ENCODE measurements at regions of chr4 and their contacts with region 1.

Region 1: GRCh38 chr4:110005461-110006056 is 92.9 kb downstream of the EGF start:
- DNase-seq: no peak
- H3K4me3 ChIP-seq: no peak overlapping the region
- H3K27ac ChIP-seq: no peak overlapping the region
- H3K4me1 ChIP-seq: no peaks in the 10 kb centered on the region
- H3K27me3 ChIP-seq: no peaks in the 10 kb centered on the region
- CTCF ChIP-seq: peak; percentile 54 to 67 (median 61)
- EP300 ChIP-seq: no peak
- POLR2A ChIP-seq: no peak

Region 2: GRCh38 chr4:109214622-109215301 is 790.8 kb before region 1 on chr4:
- in situ Hi-C with region 1: no loop called
- intact Hi-C with region 1: no loop called
- DNase-seq: no peak
- H3K4me3 ChIP-seq: no peak overlapping the region
- H3K27ac ChIP-seq: no peak overlapping the region
- H3K4me1 ChIP-seq: no peaks in the 10 kb centered on the region
- H3K27me3 ChIP-seq: no peaks in the 10 kb centered on the region
- CTCF ChIP-seq: no peak
- EP300 ChIP-seq: no peak
- POLR2A ChIP-seq: no peak

Region 3: GRCh38 chr4:110310795-110311194 is 305.2 kb after region 1 on chr4:
- in situ Hi-C with region 1: loop called in 1 of 4 experiments (anchors 25 kb)
- intact Hi-C with region 1: no loop called
- DNase-seq: no peak
- H3K4me3 ChIP-seq: no peak overlapping the region
- H3K27ac ChIP-seq: no peak overlapping the region
- H3K4me1 ChIP-seq: no peaks in the 10 kb centered on the region
- H3K27me3 ChIP-seq: no peaks in the 10 kb centered on the region
- CTCF ChIP-seq: no peak
- EP300 ChIP-seq: no peak
- POLR2A ChIP-seq: no peak

Region 4: GRCh38 chr4:110344162-110344561 is 338.6 kb after region 1 on chr4:
- in situ Hi-C with region 1: loop called in 1 of 4 experiments (anchors 25 kb)
- intact Hi-C with region 1: no loop called
- DNase-seq: peak; percentile 16
- H3K4me3 ChIP-seq: no peak overlapping the region
- H3K27ac ChIP-seq: no peak overlapping the region
- H3K4me1 ChIP-seq: no peaks in the 10 kb centered on the region
- H3K27me3 ChIP-seq: no peaks in the 10 kb centered on the region
- CTCF ChIP-seq: peak; percentile 41 to 73 (median 44)
- EP300 ChIP-seq: no peak
- POLR2A ChIP-seq: no peak

Region 5: GRCh38 chr4:110508827-110509710 is 503.5 kb after region 1 on chr4:
- in situ Hi-C with region 1: loop called in 1 of 4 experiments (anchors 10 kb)
- intact Hi-C with region 1: no loop called
- DNase-seq: no peak
- H3K4me3 ChIP-seq: no peak overlapping the region
- H3K27ac ChIP-seq: no peak overlapping the region
- H3K4me1 ChIP-seq: peaks cover 0 to 2% (median 0%) of the 10 kb centered on the region in 4 donors
- H3K27me3 ChIP-seq: no peaks in the 10 kb centered on the region
- CTCF ChIP-seq: peak in 4 of 5 experiments; percentile 23 to 53 (median 36)
- EP300 ChIP-seq: no peak
- POLR2A ChIP-seq: no peak

Measured in transverse colon (tissue), 4 donors.